ENCODE measurements at regions of chr15 and their contacts with region 1.

Region 1: DNA sequence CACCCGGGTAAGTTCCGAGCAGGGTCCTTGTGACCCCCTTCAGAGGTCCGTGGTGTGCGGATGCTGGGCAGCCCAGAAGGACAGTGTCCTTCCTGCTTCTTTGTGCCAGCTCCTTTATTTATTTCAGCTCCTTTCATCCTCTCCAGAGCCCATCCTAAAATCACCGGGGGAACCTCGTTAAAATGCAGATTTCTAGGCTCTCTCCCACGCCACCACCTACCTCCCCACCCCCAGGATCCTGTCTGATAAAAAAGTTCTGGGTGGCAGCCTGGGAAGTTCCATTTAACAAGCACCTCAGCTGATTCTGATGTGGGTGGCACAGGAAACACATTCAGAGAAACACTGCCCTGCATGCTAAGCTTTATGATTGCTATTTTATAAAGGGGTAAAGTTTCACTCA is 12.5 kb upstream of the IGF1R start:
- DNase-seq: no peak
- ATAC-seq: no peak
- H3K4me3 Mint-ChIP-seq: no peak overlapping the region
- H3K27ac Mint-ChIP-seq: no peak overlapping the region
- H3K4me1 Mint-ChIP-seq: no peaks in the 10 kb centered on the region
- H3K27me3 Mint-ChIP-seq: peaks cover 10% of the 10 kb centered on the region
- CTCF ChIP-seq: no peak

Region 2: DNA sequence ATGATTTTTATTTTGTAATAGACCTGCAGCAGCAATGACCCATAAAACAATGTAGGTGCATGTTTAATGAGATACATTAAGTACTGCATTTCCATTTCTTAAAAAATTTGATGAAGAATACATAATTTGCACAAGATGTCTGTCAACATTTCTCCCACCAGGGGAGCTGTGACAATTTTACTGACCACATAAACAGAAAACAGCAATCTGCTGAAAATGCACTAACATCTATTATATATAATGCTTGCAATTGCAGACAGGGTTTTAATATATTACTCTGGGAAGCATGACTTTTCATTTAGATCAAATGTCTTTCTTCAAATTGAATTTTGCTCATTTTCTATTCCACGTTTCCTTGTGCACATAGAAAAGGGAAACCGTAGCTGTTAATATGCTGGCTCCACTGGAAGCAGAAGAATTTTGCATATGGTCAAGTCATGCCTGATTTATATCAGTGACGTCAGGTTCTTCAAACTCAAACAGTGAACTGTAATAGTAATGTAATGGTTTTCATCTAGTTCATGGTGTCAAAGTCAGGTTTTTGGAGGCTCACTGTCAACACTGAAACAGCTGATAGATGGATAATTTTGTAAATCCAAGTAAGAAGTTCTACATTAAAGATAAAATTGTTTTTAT is 67.3 kb before region 1 on chr15:
- CTCF ChIA-PET with region 1: no interaction called
- POLR2A ChIA-PET with region 1: interaction called, 17 read pairs
- intact Hi-C with region 1: no loop called
- DNase-seq: no peak
- ATAC-seq: no peak
- H3K4me3 Mint-ChIP-seq: no peak overlapping the region
- H3K27ac Mint-ChIP-seq: no peak overlapping the region
- H3K4me1 Mint-ChIP-seq: no peaks in the 10 kb centered on the region
- H3K27me3 Mint-ChIP-seq: peaks cover 3% of the 10 kb centered on the region
- CTCF ChIP-seq: no peak

Measured in activated B cell treated with CpG ODN at 0.5 μM for 24 hours (primary cell).